SK-N-SH (cell line): ENCODE measurements at regions of chr1 and their contacts with region 1.

Region 1: GRCh38 chr1:87292684-87293493 is 35.8 kb upstream of the LMO4 start:
- DNase-seq: peak; percentile 57
- H3K4me3 ChIP-seq: no peak overlapping the region; a peak in 1 of 4 replicates
- H3K27ac ChIP-seq: no peak overlapping the region
- H3K4me1 ChIP-seq: no peaks in the 10 kb centered on the region; a peak in 1 of 4 replicates
- H3K27me3 ChIP-seq: no peaks in the 10 kb centered on the region
- CTCF ChIP-seq: peak; percentile 89
- EP300 ChIP-seq: no peak
- RAD21 ChIP-seq: peak; percentile 86

Region 2: DNA sequence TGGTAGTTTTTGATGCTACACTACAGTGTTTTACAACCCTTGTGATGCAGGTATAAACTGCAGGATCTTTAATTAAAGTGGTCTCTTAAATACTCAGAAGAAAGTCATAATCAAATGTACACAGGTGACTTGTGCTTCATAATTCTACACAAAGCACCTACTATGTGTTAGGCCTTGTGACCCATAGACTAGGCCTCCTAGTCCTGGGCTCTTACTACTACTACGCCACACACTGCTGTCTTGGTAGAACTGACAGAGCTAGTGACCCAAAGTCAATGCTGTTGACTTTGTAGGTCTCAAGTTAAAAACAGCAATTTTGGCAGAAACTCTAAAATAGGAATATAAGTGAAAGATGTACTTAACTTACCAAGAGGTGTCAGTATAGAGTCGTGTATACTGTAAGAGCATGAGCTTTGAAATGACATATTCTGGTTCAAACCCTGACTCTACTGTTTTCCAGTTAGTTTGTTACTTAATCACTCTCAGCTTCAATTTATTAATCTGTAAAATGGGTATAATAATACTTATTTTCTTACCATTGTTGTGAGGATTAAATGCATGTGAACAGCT is 12.8 kb before region 1 on chr1:
- CTCF ChIA-PET with region 1: interaction called, 13 read pairs
- POLR2A ChIA-PET with region 1: no interaction called
- DNase-seq: no peak
- H3K4me3 ChIP-seq: no peak overlapping the region
- H3K27ac ChIP-seq: no peak overlapping the region
- H3K4me1 ChIP-seq: no peaks in the 10 kb centered on the region; a peak in 1 of 4 replicates
- H3K27me3 ChIP-seq: no peaks in the 10 kb centered on the region
- CTCF ChIP-seq: peak; percentile 33; the same call in 1 of the 2 replicates
- EP300 ChIP-seq: no peak
- RAD21 ChIP-seq: peak; percentile 19; the same call in 1 of the 2 replicates

Region 3: DNA sequence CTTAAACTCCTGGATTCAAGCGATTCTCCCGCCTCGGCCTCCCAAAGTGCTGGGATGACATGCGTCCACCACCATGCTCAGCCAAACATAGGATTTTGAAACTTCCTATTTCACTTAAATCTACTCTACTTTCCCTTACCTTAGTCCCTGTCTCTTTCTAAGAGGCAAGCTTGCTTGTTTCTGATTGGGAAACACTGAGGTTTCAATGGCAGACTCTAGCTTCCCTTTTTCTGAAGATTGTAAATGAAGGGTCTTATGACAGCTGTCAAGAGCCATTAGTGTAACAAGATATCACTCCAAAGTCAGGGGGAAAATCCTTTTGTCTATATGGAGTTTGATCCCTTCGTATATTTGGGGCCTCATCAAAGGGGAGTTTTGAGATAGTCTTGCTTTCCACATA is 12.3 kb after region 1 on chr1:
- CTCF ChIA-PET with region 1: interaction called, 17 read pairs
- POLR2A ChIA-PET with region 1: no interaction called
- DNase-seq: no peak
- H3K4me3 ChIP-seq: no peak overlapping the region
- H3K27ac ChIP-seq: no peak overlapping the region
- H3K4me1 ChIP-seq: peaks cover 0 to 2% of the 10 kb centered on the region in 2 experiments; a peak in 2 of 4 replicates
- H3K27me3 ChIP-seq: no peaks in the 10 kb centered on the region
- CTCF ChIP-seq: no peak
- EP300 ChIP-seq: no peak
- RAD21 ChIP-seq: no peak